KBM-7 (cell line): ENCODE measurements at regions of chr11 and their contacts with region 1.

Region 1: DNA sequence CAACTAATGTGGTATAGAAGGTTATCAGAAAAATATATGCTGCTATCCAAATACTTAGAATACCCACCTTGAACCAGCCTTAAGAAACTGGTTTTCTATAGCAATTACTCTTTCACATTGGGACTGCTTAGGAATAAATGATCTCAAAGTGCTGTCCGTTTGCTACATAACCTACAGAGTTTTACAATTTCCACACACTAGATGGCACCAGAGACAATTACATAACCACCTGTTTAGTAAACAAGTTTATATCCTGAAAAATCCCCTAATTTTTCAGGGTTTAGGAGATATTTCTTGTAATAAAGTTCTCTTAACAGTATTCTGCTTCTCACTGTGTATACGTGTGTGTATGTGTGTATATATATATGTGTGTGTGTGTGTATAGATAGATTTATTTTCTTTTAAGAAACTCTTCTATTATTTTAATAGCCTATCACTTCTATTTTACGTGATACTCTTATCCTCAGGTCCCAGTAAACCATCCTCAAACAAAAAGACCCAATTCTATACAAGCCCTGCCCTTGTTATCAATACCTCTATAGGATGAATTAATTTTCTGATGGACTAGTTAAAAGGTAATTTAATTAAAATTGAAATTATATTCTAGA is 6.7 kb upstream of the OR5I1 start:
- DNase-seq: peak; percentile 45

Region 2: DNA sequence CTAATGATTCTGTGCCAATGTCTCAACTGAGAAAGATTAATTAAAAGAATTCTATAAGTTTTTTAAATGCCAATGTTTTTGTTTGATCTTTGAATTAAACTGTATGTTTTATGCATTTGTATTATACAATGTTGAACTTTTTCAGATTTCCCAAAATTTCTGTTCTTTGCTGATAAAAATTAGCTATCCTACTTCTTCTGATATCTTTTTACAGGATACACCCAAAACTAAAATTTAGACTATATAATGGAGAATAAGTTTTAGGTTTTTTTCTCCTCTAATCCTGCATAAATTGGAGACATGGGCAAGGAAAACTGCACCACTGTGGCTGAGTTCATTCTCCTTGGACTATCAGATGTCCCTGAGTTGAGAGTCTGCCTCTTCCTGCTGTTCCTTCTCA is 116.0 kb before region 1 on chr11 and contains the start of gene OR5L2:
- in situ Hi-C with region 1: no loop called
- DNase-seq: no peak

Region 3: GRCh38 chr11:56152333-56152732 is 209.4 kb after region 1 on chr11:
- in situ Hi-C with region 1: no loop called
- DNase-seq: no peak

Region 4: DNA sequence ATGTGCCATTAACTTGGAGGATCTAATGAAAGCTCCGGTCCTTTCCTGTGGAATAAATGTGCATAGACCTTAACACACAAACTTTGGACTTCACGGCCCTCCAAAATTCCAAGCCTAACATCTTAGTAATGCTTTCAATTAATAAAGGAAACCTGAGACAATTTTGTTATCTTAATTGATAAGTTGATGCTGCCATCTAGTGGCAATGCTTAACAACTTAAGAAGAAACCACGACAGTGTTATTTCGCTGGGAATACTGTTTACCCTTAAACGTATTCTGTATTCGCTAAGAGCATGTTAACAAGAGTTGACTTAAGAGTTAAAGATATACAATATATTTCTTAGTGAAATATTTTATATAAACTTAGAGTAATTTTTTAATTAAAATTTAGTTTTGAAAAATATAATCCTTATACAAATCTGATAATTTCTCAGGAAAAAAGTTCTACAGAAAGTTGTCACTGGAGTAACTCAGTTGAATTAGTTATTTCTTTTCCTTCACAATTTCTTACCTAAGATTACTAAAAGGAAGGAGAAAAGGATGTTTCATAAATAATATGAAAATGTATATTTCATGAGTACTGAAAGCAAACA is 840.7 kb after region 1 on chr11:
- in situ Hi-C with region 1: loop called (anchors 25 kb)
- DNase-seq: peak; percentile 37